Caco-2 (cell line): ENCODE measurements at regions of chr20 and their contacts with region 1.

Region 1: DNA sequence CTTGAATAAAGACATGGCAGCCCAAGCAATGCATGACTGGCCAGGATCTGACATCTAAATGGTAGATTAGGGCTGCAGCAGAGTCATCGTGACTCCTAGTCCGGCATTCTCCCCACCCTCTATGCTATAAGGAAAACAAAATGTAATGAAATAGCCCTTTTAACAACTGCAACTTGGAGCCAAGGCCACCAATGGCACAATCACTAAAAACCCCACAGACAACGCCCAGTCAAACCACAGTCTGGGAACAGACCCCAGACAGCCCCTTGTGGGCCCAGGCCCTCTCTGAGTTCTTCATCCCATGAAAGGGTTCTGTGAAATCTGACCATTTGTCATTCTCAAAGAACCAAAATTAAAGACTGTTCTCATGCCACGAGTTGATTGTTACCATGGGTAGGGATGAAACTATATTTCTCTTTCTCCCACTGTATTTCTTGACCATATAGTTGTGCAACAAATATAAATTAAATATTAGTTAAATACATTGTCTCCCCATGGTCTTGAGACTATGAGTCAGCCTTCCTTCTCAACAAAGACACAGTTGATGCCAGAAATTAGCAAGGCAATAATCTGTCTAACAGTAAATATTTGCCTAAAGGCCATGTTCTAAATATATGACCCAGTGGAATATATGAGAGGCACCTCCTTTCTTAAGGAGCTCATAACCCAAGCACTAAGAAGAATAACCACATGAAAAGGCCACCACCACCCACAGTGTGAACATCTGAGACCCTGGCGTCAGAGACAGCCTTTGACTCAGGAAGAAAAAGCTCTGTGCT is 85.6 kb upstream of the SSTR4 start:
- DNase-seq: no peak
- H3K4me3 ChIP-seq: no peak overlapping the region
- H3K4me3 Mint-ChIP-seq: no peak overlapping the region
- H3K27ac Mint-ChIP-seq: no peak overlapping the region
- H3K4me1 ChIP-seq: no peaks in the 10 kb centered on the region
- H3K4me1 Mint-ChIP-seq: no peaks in the 10 kb centered on the region
- H3K27me3 ChIP-seq: no peaks in the 10 kb centered on the region
- H3K27me3 Mint-ChIP-seq: no peaks in the 10 kb centered on the region
- CTCF ChIP-seq: no peak

Region 2: GRCh38 chr20:22916021-22916842 is 33.3 kb before region 1 on chr20:
- CTCF ChIA-PET with region 1: no interaction called
- POLR2A ChIA-PET with region 1: no interaction called
- intact Hi-C with region 1: loop called (anchors 1 kb)
- DNase-seq: no peak
- H3K4me3 ChIP-seq: no peak overlapping the region
- H3K4me3 Mint-ChIP-seq: no peak overlapping the region
- H3K27ac Mint-ChIP-seq: no peak overlapping the region
- H3K4me1 ChIP-seq: peaks cover 7% of the 10 kb centered on the region; the same call in 1 of the 2 replicates
- H3K4me1 Mint-ChIP-seq: no peaks in the 10 kb centered on the region
- H3K27me3 ChIP-seq: no peaks in the 10 kb centered on the region
- H3K27me3 Mint-ChIP-seq: no peaks in the 10 kb centered on the region
- CTCF ChIP-seq: no peak

Region 3: GRCh38 chr20:22999752-23000151 is 50.2 kb after region 1 on chr20:
- CTCF ChIA-PET with region 1: no interaction called
- POLR2A ChIA-PET with region 1: no interaction called
- intact Hi-C with region 1: no loop called
- DNase-seq: no peak
- H3K4me3 ChIP-seq: no peak overlapping the region
- H3K4me3 Mint-ChIP-seq: no peak overlapping the region
- H3K27ac Mint-ChIP-seq: no peak overlapping the region
- H3K4me1 ChIP-seq: no peaks in the 10 kb centered on the region
- H3K4me1 Mint-ChIP-seq: no peaks in the 10 kb centered on the region
- H3K27me3 ChIP-seq: no peaks in the 10 kb centered on the region
- H3K27me3 Mint-ChIP-seq: no peaks in the 10 kb centered on the region
- CTCF ChIP-seq: no peak